PC-3 (cell line): ENCODE measurements at regions of chr11 and their contacts with region 1.

Region 1: GRCh38 chr11:832321-833113 is at the start of gene CD151:
- DNase-seq: peak; percentile 60
- ATAC-seq: peak; percentile 14
- H3K4me3 ChIP-seq: peak within 1 kb of the TSS; percentile 83
- H3K27ac ChIP-seq: peak within 1 kb of the TSS; percentile 91
- H3K4me1 ChIP-seq: peaks cover 29% of the 10 kb centered on the region
- H3K27me3 ChIP-seq: no peaks in the 10 kb centered on the region
- CTCF ChIP-seq: no peak
- total RNA-seq, gene CD151: 469 and 490 TPM in 2 replicates

Region 2: DNA sequence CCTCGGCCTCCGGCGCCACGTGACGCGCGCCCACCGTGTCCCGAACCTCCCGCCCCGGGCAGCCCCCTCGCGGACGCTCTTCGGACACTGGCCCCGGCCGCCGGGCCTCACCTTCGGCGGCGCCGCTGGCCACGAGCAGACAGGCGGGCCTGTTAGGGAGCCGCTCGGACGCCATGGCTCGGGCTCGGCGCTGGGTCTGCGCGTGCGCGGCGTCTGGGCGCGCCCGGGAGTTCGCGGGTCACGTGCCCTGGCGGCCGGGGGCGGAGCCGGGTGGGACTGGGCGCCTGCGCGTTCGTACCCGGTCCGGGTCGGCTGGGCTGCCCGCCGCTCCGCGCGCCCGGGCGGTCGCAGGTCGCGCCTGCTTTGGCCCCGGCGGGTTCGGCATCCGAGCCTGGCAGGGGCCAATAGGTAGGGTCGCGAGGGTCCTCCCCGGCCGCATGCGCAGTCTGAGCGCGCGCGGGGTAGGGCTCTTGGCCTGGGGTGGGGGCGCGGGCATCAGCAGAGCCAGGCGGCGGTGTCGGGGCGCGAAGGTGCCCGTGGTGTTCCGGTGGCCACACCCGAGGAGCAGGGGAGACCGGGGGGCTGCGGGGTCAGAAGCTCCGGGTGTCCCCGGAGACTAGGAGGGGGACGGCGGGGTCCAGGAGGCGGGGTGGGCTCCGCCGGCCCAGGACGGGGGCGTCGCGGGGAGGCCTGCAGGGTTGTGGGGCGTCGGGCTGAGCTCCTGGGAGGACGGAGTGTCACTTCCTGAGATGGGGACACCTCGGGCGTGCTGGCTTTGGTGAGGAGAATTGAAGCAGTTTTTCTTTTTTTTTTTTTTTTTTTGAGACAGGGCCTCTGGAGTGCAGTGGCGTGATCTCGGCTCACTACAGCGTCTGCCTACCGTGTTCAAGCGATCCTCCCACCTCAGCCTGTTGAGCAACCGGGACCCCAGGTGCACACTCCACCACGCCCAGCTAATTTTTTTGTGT is 54.9 kb before region 1 on chr11 and contains the start of gene GATD1:
- CTCF ChIA-PET with region 1: no interaction called
- POLR2A ChIA-PET with region 1: interaction called, 16 read pairs
- intact Hi-C with region 1: no loop called
- DNase-seq: peak; percentile 86
- ATAC-seq: peak; percentile 72
- H3K4me3 ChIP-seq: peak within 1 kb of the TSS; percentile 95
- H3K27ac ChIP-seq: peak within 1 kb of the TSS; percentile 40
- H3K4me1 ChIP-seq: peaks cover 22% of the 10 kb centered on the region
- H3K27me3 ChIP-seq: no peaks in the 10 kb centered on the region
- CTCF ChIP-seq: no peak
- total RNA-seq, gene GATD1: 38.9 and 39.7 TPM in 2 replicates

Region 3: GRCh38 chr11:811446-812245 is 20.9 kb before region 1 on chr11:
- CTCF ChIA-PET with region 1: interaction called, 10 read pairs
- POLR2A ChIA-PET with region 1: no interaction called
- intact Hi-C with region 1: no loop called
- DNase-seq: no peak
- ATAC-seq: no peak
- H3K4me3 ChIP-seq: peak overlapping the region; percentile 93
- H3K27ac ChIP-seq: no peak overlapping the region
- H3K4me1 ChIP-seq: peaks cover 20% of the 10 kb centered on the region
- H3K27me3 ChIP-seq: no peaks in the 10 kb centered on the region
- CTCF ChIP-seq: peak; percentile 28; the same call in 1 of the 2 replicates

Region 4: DNA sequence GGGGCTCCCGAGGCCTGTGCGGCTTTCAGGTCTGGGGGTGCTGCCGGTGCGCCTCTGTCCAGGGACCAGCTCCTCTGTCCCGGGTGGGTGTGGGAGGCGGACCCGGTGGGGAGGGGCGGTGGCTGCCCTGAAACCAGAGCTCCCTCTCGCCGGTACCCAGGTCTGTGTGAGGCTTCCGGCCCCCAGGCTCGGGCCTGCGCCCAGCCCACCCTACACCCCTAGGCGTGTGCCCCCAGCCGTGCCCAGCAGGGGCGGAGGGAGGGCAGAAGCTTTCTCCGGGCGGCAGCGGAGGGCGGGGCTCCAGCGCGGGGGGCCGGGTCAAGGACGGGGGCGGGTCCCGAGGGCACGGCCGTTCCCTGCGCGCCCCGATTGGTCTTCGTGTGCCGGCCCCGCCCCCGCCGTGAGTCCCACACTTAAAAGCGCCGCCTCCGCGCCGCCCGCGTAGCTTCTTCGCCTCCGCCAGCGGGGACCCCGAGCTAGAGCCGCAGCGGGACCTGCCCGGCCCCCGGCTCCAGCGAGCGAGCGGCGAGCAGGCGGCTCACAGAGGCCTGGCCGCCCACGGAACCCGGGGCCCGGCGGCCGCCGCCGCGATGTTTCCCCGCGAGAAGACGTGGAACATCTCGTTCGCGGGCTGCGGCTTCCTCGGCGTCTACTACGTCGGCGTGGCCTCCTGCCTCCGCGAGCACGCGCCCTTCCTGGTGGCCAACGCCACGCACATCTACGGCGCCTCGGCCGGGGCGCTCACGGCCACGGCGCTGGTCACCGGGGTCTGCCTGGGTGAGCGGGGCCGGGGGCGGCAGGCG is 13.2 kb before region 1 on chr11:
- CTCF ChIA-PET with region 1: interaction called, 18 read pairs
- POLR2A ChIA-PET with region 1: interaction called, 16 read pairs
- intact Hi-C with region 1: no loop called
- DNase-seq: peak; percentile 80
- ATAC-seq: peak; percentile 59
- H3K4me3 ChIP-seq: peak overlapping the region; percentile 89
- H3K27ac ChIP-seq: peak overlapping the region; percentile 30; the same call in 1 of the 2 replicates
- H3K4me1 ChIP-seq: peaks cover 26% of the 10 kb centered on the region
- H3K27me3 ChIP-seq: no peaks in the 10 kb centered on the region
- CTCF ChIP-seq: no peak